ENCODE measurements at regions of chr17 and their contacts with region 1.

Region 1: GRCh38 chr17:50200457-50201275 is 765 bp downstream of the COL1A1 start:
- DNase-seq: peak; percentile 78
- H3K4me3 ChIP-seq: peak overlapping the region; percentile 100
- H3K27ac ChIP-seq: peak overlapping the region; percentile 98
- H3K27me3 ChIP-seq: no peaks in the 10 kb centered on the region
- CTCF ChIP-seq: peak; percentile 85

Region 2: GRCh38 chr17:50269477-50270434 is 69.1 kb after region 1 on chr17:
- in situ Hi-C with region 1: loop called (anchors 5 kb)
- DNase-seq: peak; percentile 88
- H3K4me3 ChIP-seq: no peak overlapping the region
- H3K27ac ChIP-seq: peak overlapping the region; percentile 79
- H3K27me3 ChIP-seq: no peaks in the 10 kb centered on the region
- CTCF ChIP-seq: peak; percentile 94